CD4-positive, alpha-beta T cell (primary cell): ENCODE measurements at regions of chr7 and their contacts with region 1.

Region 1: GRCh38 chr7:103074519-103075336 is at the starts of genes ARMC10 and FBXL13:
- DNase-seq: peak; percentile 81 to 96 (median 88)
- ATAC-seq: peak; percentile 80
- H3K4me3 ChIP-seq: peak within 1 kb of the TSS; percentile 92
- H3K4me3 Mint-ChIP-seq: peak within 1 kb of the TSS; percentile 99
- H3K27ac ChIP-seq: peak within 1 kb of the TSS; percentile 47 to 71
- H3K27ac Mint-ChIP-seq: peak within 1 kb of the TSS; percentile 91
- H3K4me1 ChIP-seq: peaks cover 29% of the 10 kb centered on the region
- H3K4me1 Mint-ChIP-seq: peaks cover 35% of the 10 kb centered on the region
- H3K27me3 ChIP-seq: no peaks in the 10 kb centered on the region
- H3K27me3 Mint-ChIP-seq: no peaks in the 10 kb centered on the region
- CTCF ChIP-seq: peak; percentile 16
- total RNA-seq, gene ARMC10: 6.0 to 6.9 TPM
- total RNA-seq, gene FBXL13: 0.89 to 1.4 TPM

Region 2: GRCh38 chr7:101815835-101816493 is 1258.8 kb before region 1 on chr7:
- CTCF ChIA-PET with region 1: no interaction called
- POLR2A ChIA-PET with region 1: no interaction called
- intact Hi-C with region 1: loop called in 1 of 2 experiments (anchors 10 kb)
- DNase-seq: peak; percentile 48 to 89 (median 64)
- ATAC-seq: peak; percentile 81
- H3K4me3 ChIP-seq: peak overlapping the region; percentile 57
- H3K4me3 Mint-ChIP-seq: peak overlapping the region; percentile 90
- H3K27ac ChIP-seq: no peak overlapping the region
- H3K27ac Mint-ChIP-seq: peak overlapping the region; percentile 51
- H3K4me1 ChIP-seq: peaks cover 16% of the 10 kb centered on the region
- H3K4me1 Mint-ChIP-seq: peaks cover 35% of the 10 kb centered on the region
- H3K27me3 ChIP-seq: no peaks in the 10 kb centered on the region
- H3K27me3 Mint-ChIP-seq: peaks cover 5% of the 10 kb centered on the region
- CTCF ChIP-seq: no peak

Region 3: DNA sequence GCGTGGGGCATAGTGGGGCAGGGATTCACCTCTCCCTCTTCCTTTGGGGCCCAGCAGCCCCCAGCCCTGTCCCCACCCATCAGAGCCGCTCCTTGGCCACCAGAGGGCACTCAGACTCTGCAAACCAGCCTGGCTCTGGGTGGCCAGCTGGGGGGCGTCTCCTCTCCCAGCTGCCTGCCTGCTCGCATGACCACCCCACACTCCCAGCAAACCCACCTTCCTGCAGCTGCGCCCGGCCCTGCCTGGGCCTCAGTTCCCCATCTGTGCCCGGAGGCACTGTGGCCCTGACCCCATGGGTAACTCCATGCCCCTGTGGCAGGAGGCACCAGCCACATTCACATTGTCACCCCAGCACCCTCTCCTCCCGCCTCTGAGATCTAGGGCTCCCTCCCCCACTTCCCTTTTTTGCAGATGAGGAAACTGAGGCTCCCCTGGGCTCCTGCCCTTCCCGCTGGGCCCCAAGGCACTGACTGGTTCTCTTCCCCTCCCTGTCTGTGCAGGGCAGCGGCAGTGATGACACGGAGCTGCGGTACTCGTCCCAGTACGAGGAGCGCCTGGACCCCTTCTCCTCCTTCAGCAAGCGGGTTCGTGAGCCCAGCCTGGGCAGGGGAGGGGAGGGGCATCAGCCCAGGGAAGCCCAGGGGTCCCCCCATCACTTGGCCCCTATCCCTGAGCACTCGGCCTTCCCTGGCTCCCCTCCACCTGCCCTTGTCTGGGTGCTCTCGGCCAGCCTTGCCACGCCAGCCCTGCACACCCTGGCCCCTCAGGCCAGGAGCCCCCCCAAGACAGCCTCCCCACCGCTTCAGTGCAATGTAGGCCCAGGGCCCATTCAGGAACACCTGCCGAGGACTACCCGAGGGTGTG is 795.0 kb before region 1 on chr7:
- CTCF ChIA-PET with region 1: no interaction called
- POLR2A ChIA-PET with region 1: no interaction called
- intact Hi-C with region 1: loop called in 1 of 2 experiments (anchors 10 kb)
- DNase-seq: peak in 13 of 14 experiments; percentile 37 to 82 (median 51)
- ATAC-seq: peak; percentile 89
- H3K4me3 ChIP-seq: no peak overlapping the region
- H3K4me3 Mint-ChIP-seq: no peak overlapping the region
- H3K27ac ChIP-seq: no peak overlapping the region
- H3K27ac Mint-ChIP-seq: no peak overlapping the region
- H3K4me1 ChIP-seq: peaks cover 14% of the 10 kb centered on the region
- H3K4me1 Mint-ChIP-seq: peaks cover 6% of the 10 kb centered on the region
- H3K27me3 ChIP-seq: no peaks in the 10 kb centered on the region
- H3K27me3 Mint-ChIP-seq: no peaks in the 10 kb centered on the region
- CTCF ChIP-seq: peak; percentile 81

Region 4: DNA sequence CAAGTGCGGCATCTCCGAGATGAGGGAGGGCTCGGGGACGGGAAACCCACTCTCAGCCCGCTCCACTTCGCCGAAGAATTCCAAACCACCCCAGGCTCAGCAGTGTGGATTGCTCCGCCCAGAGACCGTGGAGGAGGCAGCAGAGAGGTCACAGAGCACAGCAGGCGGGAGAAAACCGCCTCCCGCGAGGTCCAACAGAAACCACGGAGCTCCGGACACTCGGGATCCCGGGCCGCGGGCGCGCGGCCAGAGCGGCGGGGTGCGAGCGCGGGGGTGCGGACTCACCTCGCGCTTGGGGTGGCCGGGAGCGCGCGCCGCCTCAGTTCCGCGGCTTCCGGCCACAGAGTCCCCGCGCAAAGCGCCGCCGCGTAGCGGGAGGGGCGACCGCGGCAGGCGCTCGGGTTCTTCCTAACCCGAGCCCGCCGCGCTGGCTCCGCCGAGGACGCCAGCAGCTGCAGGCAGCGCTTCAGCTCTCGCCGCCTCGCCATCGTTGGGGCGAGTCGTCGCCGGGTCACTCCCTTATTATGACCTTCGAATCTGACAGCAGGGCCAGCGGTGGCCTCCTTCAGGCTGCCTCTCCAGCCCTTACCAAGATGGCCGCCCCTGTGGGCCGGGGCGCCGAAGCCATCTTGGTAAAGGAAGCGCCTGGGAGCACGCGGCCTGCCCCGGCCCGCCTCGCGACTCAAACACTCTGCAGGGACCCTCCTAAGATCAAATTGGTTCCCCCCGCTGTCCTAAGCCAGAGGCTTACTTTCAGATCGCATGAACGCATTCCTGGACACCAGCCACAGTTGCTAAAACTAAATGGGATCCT is 74.5 kb after region 1 on chr7 and contains the start of gene NAPEPLD:
- CTCF ChIA-PET with region 1: interaction called, 3 read pairs
- POLR2A ChIA-PET with region 1: interaction called, 20 read pairs
- intact Hi-C with region 1: loop called (anchors 2 kb)
- DNase-seq: peak; percentile 47 to 89 (median 67)
- ATAC-seq: peak; percentile 86
- H3K4me3 ChIP-seq: peak within 1 kb of the TSS; percentile 70
- H3K4me3 Mint-ChIP-seq: peak within 1 kb of the TSS; percentile 97
- H3K27ac ChIP-seq: peak within 1 kb of the TSS; percentile 67 to 72
- H3K27ac Mint-ChIP-seq: peak within 1 kb of the TSS; percentile 90
- H3K4me1 ChIP-seq: peaks cover 10% of the 10 kb centered on the region
- H3K4me1 Mint-ChIP-seq: peaks cover 51% of the 10 kb centered on the region
- H3K27me3 ChIP-seq: no peaks in the 10 kb centered on the region
- H3K27me3 Mint-ChIP-seq: no peaks in the 10 kb centered on the region
- CTCF ChIP-seq: no peak
- total RNA-seq, gene NAPEPLD: 1.5 to 1.7 TPM

Region 5: GRCh38 chr7:103296901-103297836 is 222.4 kb after region 1 on chr7 and contains the start of gene PMPCB:
- CTCF ChIA-PET with region 1: no interaction called
- POLR2A ChIA-PET with region 1: interaction called, 3 read pairs
- intact Hi-C with region 1: loop called in 1 of 2 experiments (anchors 5 kb)
- DNase-seq: peak; percentile 93 to 98 (median 96)
- ATAC-seq: peak; percentile 99
- H3K4me3 ChIP-seq: peak within 1 kb of the TSS; percentile 80
- H3K4me3 Mint-ChIP-seq: peak within 1 kb of the TSS; percentile 94
- H3K27ac ChIP-seq: peak within 1 kb of the TSS; percentile 80 to 87
- H3K27ac Mint-ChIP-seq: peak within 1 kb of the TSS; percentile 85
- H3K4me1 ChIP-seq: peaks cover 20% of the 10 kb centered on the region
- H3K4me1 Mint-ChIP-seq: peaks cover 42% of the 10 kb centered on the region
- H3K27me3 ChIP-seq: no peaks in the 10 kb centered on the region
- H3K27me3 Mint-ChIP-seq: no peaks in the 10 kb centered on the region
- CTCF ChIP-seq: peak; percentile 88
- total RNA-seq, gene PMPCB: 101 to 103 TPM

Region 6: DNA sequence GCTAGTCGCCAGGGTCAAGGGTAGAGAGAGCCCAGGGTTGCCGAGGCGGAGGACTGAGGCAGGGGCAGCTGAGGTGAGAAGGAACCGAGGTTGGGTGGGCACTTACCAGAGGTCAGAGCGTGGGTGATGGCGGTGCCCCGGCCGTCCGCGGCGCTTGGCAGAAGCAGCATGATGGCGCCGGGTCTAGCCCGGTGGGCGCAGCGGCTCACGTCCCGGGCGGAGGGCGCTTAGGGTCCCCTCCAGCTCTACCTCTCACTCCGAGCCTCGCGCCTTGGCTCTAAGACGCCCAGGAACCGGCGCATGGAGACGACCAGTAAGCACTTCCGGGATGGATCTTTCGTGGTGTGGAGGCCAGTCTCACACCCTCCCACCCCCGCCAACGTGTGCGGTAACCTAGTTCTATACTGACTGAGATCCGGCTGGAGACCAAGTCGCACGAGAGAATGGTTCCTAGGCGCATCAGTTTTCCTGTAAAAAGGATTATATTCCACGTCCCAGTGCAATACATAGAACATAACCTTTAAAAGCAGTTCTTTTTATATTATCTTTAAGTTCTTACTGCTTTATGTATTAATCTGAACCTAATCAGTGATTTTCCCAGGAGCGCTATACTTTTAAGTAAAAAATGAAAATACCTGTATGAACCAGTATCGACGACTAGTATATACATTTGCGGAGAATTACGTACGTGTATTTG is 269.9 kb after region 1 on chr7 and contains the start of gene DNAJC2:
- CTCF ChIA-PET with region 1: no interaction called
- POLR2A ChIA-PET with region 1: interaction called, 7 read pairs
- intact Hi-C with region 1: loop called in 1 of 2 experiments (anchors 5 kb)
- DNase-seq: peak; percentile 74 to 95 (median 78)
- ATAC-seq: peak; percentile 86
- H3K4me3 ChIP-seq: peak within 1 kb of the TSS; percentile 94
- H3K4me3 Mint-ChIP-seq: peak within 1 kb of the TSS; percentile 97
- H3K27ac ChIP-seq: peak within 1 kb of the TSS; percentile 73 to 82
- H3K27ac Mint-ChIP-seq: peak within 1 kb of the TSS; percentile 85
- H3K4me1 ChIP-seq: peaks cover 28% of the 10 kb centered on the region
- H3K4me1 Mint-ChIP-seq: peaks cover 76% of the 10 kb centered on the region
- H3K27me3 ChIP-seq: no peaks in the 10 kb centered on the region
- H3K27me3 Mint-ChIP-seq: no peaks in the 10 kb centered on the region
- CTCF ChIP-seq: no peak
- total RNA-seq, gene DNAJC2: 72.0 to 77.4 TPM

Region 7: GRCh38 chr7:104207731-104208420 is 1133.1 kb after region 1 on chr7 and contains the start of gene ORC5:
- CTCF ChIA-PET with region 1: no interaction called
- POLR2A ChIA-PET with region 1: no interaction called
- intact Hi-C with region 1: loop called in 1 of 2 experiments (anchors 10 kb)
- DNase-seq: peak; percentile 53 to 89 (median 66)
- ATAC-seq: peak; percentile 97
- H3K4me3 ChIP-seq: peak within 1 kb of the TSS; percentile 92
- H3K4me3 Mint-ChIP-seq: peak within 1 kb of the TSS; percentile 97
- H3K27ac ChIP-seq: peak within 1 kb of the TSS; percentile 58 to 77
- H3K27ac Mint-ChIP-seq: peak within 1 kb of the TSS; percentile 94
- H3K4me1 ChIP-seq: peaks cover 20% of the 10 kb centered on the region
- H3K4me1 Mint-ChIP-seq: peaks cover 46% of the 10 kb centered on the region
- H3K27me3 ChIP-seq: no peaks in the 10 kb centered on the region
- H3K27me3 Mint-ChIP-seq: peaks cover 17% of the 10 kb centered on the region
- CTCF ChIP-seq: no peak
- total RNA-seq, gene ORC5: 7.7 to 9.3 TPM